B cell (primary cell): ENCODE measurements at regions of chr1 and their contacts with region 1.

Region 1: DNA sequence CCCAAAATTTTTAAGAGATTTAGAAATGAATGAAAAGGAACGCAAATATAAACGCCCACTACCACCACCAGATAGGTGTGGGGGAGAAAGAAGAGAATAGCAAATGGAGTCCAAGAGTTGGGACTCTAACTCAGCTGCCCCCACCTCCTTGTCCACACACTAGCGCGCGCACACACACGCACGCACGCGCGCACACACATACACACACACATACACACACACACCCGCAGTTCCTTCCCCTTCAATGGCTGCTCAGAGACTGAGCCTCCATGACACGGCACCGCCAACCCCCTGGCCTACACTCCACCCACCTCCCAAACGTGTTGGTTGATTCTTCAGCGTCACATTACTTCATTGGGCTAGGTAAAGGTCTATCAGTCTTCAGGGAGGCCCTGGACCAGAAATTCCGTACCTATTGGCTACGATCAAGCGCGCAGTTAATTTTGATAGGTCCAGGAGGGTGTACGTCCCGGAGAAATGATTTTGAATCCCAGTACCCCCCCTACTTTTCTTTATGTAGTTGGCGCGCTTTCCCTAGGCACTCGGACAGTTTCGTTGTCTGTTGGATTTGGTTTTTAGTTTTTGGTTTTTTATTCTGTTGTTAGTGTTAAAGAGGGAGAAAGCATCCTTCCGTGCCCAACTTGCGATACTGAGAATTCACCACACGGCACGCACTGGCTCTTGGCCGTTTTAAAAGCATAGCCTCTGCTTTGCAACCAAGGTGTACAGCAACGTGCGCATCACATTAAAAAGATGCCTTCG is at the start of gene ANP32E:
- DNase-seq: peak; percentile 98
- ATAC-seq: peak; percentile 89
- H3K4me3 ChIP-seq: peak within 1 kb of the TSS; percentile 83 to 98 (median 86)
- H3K4me3 Mint-ChIP-seq: no peak within 1 kb of the TSS
- H3K27ac ChIP-seq: peak within 1 kb of the TSS; percentile 97 to 98
- H3K27ac Mint-ChIP-seq: no peak within 1 kb of the TSS
- H3K4me1 ChIP-seq: peaks cover 23% of the 10 kb centered on the region in 2 donors
- H3K4me1 Mint-ChIP-seq: peaks cover 16% of the 10 kb centered on the region
- H3K27me3 ChIP-seq: no peaks in the 10 kb centered on the region
- H3K27me3 Mint-ChIP-seq: no peaks in the 10 kb centered on the region
- CTCF ChIP-seq: no peak
- total RNA-seq, gene ANP32E: 42.4 and 47.1 TPM in 2 replicates

Region 2: DNA sequence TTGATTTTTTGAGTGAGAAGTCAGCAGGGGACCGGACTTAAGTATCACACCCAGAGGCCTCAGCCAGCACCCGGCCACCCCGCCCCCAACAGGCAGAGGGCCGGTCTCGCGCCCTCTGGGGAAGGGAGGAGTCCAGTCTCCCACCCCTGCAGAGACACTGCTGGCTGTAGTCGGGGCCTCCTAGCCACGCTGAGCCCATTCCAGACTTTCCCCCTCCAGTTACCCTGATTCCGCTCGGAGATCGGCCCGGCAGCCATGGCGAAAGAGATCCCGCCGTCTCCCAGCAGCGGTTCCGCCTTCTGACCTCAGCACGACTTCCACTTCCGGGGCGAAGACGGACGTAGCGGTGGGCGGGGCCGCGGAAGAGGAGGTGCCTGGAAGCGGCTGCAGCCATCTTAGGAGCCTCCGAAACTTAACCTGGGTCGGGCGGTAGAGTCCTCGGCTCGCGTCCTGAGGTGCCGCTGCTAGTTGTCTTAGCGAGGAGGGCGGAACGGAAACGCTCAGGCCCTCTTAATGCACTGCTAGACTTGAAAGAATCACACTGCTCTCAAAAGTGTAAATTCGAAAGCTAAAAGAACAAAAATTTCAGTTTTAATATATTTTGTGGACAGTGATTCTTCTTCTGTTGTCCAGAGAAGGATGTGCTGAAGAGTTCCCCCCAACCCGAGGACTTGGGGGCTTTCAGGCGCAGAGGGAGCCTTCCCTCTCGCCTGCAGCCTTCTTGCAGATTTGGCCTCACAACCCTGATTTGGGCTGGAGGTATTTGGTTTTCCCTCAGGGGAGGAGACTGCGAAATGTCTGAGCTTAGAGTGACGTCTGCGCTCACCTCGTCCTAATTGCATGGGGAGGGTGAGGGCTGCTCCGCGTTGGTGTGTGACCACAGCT is 308.3 kb before region 1 on chr1 and contains the start of gene SF3B4:
- CTCF ChIA-PET with region 1: no interaction called
- POLR2A ChIA-PET with region 1: no interaction called
- intact Hi-C with region 1: loop called (anchors 1 kb)
- DNase-seq: peak; percentile 96
- ATAC-seq: peak; percentile 95
- H3K4me3 ChIP-seq: peak within 1 kb of the TSS; percentile 76 to 98 (median 89)
- H3K4me3 Mint-ChIP-seq: peak within 1 kb of the TSS; percentile 98
- H3K27ac ChIP-seq: peak within 1 kb of the TSS; percentile 74 to 90
- H3K27ac Mint-ChIP-seq: peak within 1 kb of the TSS; percentile 97
- H3K4me1 ChIP-seq: peaks cover 17 to 24% of the 10 kb centered on the region in 2 donors
- H3K4me1 Mint-ChIP-seq: peaks cover 38% of the 10 kb centered on the region
- H3K27me3 ChIP-seq: peaks cover 0 to 2% (median 0%) of the 10 kb centered on the region in 4 experiments
- H3K27me3 Mint-ChIP-seq: peaks cover 20% of the 10 kb centered on the region
- CTCF ChIP-seq: no peak
- total RNA-seq, gene SF3B4: 59.7 and 60.1 TPM in 2 replicates

Region 3: GRCh38 chr1:150168960-150169601 is 67.0 kb before region 1 on chr1:
- CTCF ChIA-PET with region 1: no interaction called
- POLR2A ChIA-PET with region 1: no interaction called
- intact Hi-C with region 1: no loop called
- DNase-seq: peak; percentile 68
- ATAC-seq: peak; percentile 59
- H3K4me3 ChIP-seq: no peak overlapping the region
- H3K4me3 Mint-ChIP-seq: no peak overlapping the region
- H3K27ac ChIP-seq: no peak overlapping the region
- H3K27ac Mint-ChIP-seq: no peak overlapping the region
- H3K4me1 ChIP-seq: peaks cover 27 to 35% of the 10 kb centered on the region in 2 donors
- H3K4me1 Mint-ChIP-seq: peaks cover 29% of the 10 kb centered on the region
- H3K27me3 ChIP-seq: no peaks in the 10 kb centered on the region
- H3K27me3 Mint-ChIP-seq: no peaks in the 10 kb centered on the region
- CTCF ChIP-seq: peak; percentile 58

Region 4: DNA sequence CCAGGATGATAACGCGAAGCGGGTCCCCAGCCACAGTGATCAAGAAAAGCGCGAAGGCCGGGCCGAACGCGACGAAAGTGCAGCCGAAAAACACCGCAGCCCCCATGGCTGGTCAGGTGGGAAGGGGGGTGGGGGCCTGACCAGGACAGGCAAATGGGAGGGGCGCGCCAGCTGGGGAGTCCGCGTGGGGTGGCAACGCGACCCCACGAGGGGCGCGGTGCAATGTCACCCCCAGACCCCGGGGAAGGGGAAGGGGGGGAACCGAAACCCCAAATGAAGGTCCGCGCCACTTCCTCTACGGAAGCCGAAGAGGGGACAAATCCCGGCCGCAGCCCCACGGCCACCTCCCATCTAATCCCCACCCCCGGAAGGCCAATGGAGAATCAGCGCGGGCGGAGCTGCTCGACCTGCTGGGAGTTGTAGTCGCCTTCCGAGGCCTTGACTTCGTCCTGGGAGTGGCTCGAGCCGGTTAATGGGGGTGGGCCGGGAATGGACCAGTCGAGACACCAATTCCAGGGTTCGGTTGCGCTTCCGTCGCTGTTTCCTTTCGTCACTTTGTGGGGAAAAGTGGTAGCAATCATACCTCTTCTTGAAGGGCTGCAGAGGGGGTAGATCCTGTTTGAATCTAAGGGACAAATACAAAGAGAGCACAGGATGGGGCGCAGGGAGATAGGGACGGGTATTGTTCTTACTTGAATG is 32.8 kb after region 1 on chr1 and contains the start of gene APH1A:
- CTCF ChIA-PET with region 1: no interaction called
- POLR2A ChIA-PET with region 1: interaction called, 7 read pairs
- intact Hi-C with region 1: loop called (anchors 1 kb)
- DNase-seq: peak; percentile 96
- ATAC-seq: peak; percentile 98
- H3K4me3 ChIP-seq: peak within 1 kb of the TSS; percentile 62 to 98 (median 95)
- H3K4me3 Mint-ChIP-seq: peak within 1 kb of the TSS; percentile 97
- H3K27ac ChIP-seq: peak within 1 kb of the TSS; percentile 94 to 95
- H3K27ac Mint-ChIP-seq: peak within 1 kb of the TSS; percentile 98
- H3K4me1 ChIP-seq: peaks cover 19 to 27% of the 10 kb centered on the region in 2 donors
- H3K4me1 Mint-ChIP-seq: peaks cover 30% of the 10 kb centered on the region
- H3K27me3 ChIP-seq: no peaks in the 10 kb centered on the region
- H3K27me3 Mint-ChIP-seq: peaks cover 6% of the 10 kb centered on the region
- CTCF ChIP-seq: no peak
- total RNA-seq, gene APH1A: 134 and 135 TPM in 2 replicates

Region 5: GRCh38 chr1:150293433-150294168 is 57.6 kb after region 1 on chr1 and contains the start of gene MRPS21:
- CTCF ChIA-PET with region 1: no interaction called
- POLR2A ChIA-PET with region 1: interaction called, 8 read pairs
- intact Hi-C with region 1: loop called (anchors 1 kb)
- DNase-seq: peak; percentile 94
- ATAC-seq: peak; percentile 97
- H3K4me3 ChIP-seq: peak within 1 kb of the TSS; percentile 68 to 96 (median 78)
- H3K4me3 Mint-ChIP-seq: peak within 1 kb of the TSS; percentile 95
- H3K27ac ChIP-seq: peak within 1 kb of the TSS; percentile 78 to 97
- H3K27ac Mint-ChIP-seq: peak within 1 kb of the TSS; percentile 98
- H3K4me1 ChIP-seq: peaks cover 13 to 18% of the 10 kb centered on the region in 2 donors
- H3K4me1 Mint-ChIP-seq: peaks cover 20% of the 10 kb centered on the region
- H3K27me3 ChIP-seq: no peaks in the 10 kb centered on the region
- H3K27me3 Mint-ChIP-seq: peaks cover 4% of the 10 kb centered on the region
- CTCF ChIP-seq: no peak
- total RNA-seq, gene MRPS21: 56.5 and 60.4 TPM in 2 replicates

Region 6: GRCh38 chr1:150321826-150322166 is 85.8 kb after region 1 on chr1:
- CTCF ChIA-PET with region 1: no interaction called
- POLR2A ChIA-PET with region 1: no interaction called
- intact Hi-C with region 1: no loop called
- DNase-seq: no peak
- ATAC-seq: no peak
- H3K4me3 ChIP-seq: peak overlapping the region; percentile 85 to 99 (median 92)
- H3K4me3 Mint-ChIP-seq: peak overlapping the region; percentile 98
- H3K27ac ChIP-seq: peak overlapping the region; percentile 86 to 97
- H3K27ac Mint-ChIP-seq: peak overlapping the region; percentile 98
- H3K4me1 ChIP-seq: peaks cover 13% of the 10 kb centered on the region in 2 donors
- H3K4me1 Mint-ChIP-seq: peaks cover 24% of the 10 kb centered on the region
- H3K27me3 ChIP-seq: no peaks in the 10 kb centered on the region
- H3K27me3 Mint-ChIP-seq: no peaks in the 10 kb centered on the region
- CTCF ChIP-seq: no peak